GM13977 (cell line): ENCODE measurements at regions of chr2 and their contacts with region 1.

Region 1: GRCh38 chr2:46029332-46029811 is 267.8 kb upstream of the EPAS1 start:
- DNase-seq: no peak
- CTCF ChIP-seq: peak; percentile 30

Region 2: DNA sequence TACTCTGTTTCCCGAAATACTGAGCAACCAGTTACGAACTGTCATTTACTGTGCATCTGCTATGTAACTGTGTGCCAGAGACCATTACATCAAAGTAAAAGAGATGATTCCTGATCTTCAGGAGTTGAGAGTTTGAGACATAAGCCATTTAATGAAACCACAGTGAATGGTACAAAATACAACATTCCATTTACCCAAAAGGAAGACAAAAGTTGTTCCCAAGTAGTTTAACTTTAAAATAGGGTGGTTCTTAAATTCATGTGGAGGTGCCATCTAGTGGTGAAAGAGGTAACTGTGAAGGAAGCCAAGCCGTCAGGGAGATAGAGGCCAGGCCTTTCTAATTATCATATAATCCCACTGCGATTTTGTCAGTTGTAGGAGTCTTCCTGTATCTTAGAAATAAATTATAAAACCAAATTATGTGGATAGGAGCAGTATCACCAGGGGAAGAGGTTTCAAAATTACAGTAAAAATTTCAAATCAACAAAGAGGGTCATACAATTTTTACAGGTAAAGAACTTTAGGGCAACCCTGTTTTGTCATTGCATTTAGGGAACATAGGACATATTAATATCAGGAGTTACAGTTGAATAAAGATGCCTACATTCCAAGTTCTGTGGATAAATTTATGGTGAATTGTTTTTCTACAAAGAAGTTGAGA is 335.6 kb after region 1 on chr2:
- in situ Hi-C with region 1: loop called (anchors 25 kb)
- DNase-seq: peak; percentile 71
- CTCF ChIP-seq: peak; percentile 71